Heart right ventricle (tissue), 16 donors: ENCODE measurements at regions of chr10 and their contacts with region 1.

Region 1: GRCh38 chr10:37754538-37755323 is 102.7 kb downstream of the ZNF248 start:
- DNase-seq: peak in 1 of 2 donors; percentile 18
- ATAC-seq: peak in 7 of 8 donors; percentile 34 to 86 (median 62)
- H3K4me3 ChIP-seq: no peak overlapping the region
- H3K27ac ChIP-seq: no peak overlapping the region
- H3K4me1 ChIP-seq: no peaks in the 10 kb centered on the region
- H3K27me3 ChIP-seq: no peaks in the 10 kb centered on the region
- CTCF ChIP-seq: peak in 8 of 9 donors; percentile 28 to 68 (median 60)

Region 2: GRCh38 chr10:36899651-36900050 is 855.1 kb before region 1 on chr10:
- intact Hi-C with region 1: loop called in 4 of 10 experiments (anchors 10 kb)
- DNase-seq: no peak
- ATAC-seq: no peak
- H3K4me3 ChIP-seq: no peak overlapping the region
- H3K27ac ChIP-seq: no peak overlapping the region
- H3K4me1 ChIP-seq: no peaks in the 10 kb centered on the region
- H3K27me3 ChIP-seq: no peaks in the 10 kb centered on the region
- CTCF ChIP-seq: no peak

Region 3: GRCh38 chr10:37434091-37434490 is 320.6 kb before region 1 on chr10:
- intact Hi-C with region 1: loop called in 5 of 10 experiments (anchors 5 to 10 kb)
- DNase-seq: no peak
- ATAC-seq: no peak
- H3K4me3 ChIP-seq: no peak overlapping the region
- H3K27ac ChIP-seq: no peak overlapping the region
- H3K4me1 ChIP-seq: no peaks in the 10 kb centered on the region
- H3K27me3 ChIP-seq: peaks cover 0 to 17% (median 0%) of the 10 kb centered on the region in 7 donors
- CTCF ChIP-seq: peak in 7 of 9 donors; percentile 15 to 53 (median 35)

Region 4: DNA sequence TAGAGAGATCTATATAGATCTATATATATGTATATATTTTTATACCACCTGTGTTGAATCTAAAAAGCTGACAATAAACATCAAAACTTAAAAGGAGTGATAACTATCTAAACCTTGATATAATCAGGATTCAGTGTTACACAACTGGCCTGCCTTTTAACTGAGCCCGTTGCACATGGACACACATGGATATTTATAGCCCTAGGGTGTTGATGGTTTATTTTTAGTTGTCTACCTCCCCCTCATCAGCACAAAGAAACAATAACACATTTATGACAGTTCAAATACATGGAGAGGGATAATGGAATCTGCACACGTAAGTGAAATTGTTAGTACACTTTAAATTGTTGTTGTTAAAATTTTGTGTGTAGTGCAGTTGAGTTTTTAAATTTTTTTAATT is 234.2 kb before region 1 on chr10:
- intact Hi-C with region 1: loop called in 1 of 10 experiments (anchors 10 kb)
- DNase-seq: no peak
- ATAC-seq: peak in 6 of 8 donors; percentile 70 to 92 (median 79)
- H3K4me3 ChIP-seq: no peak overlapping the region
- H3K27ac ChIP-seq: no peak overlapping the region
- H3K4me1 ChIP-seq: peaks cover 0 to 11% (median 0%) of the 10 kb centered on the region in 9 donors
- H3K27me3 ChIP-seq: no peaks in the 10 kb centered on the region
- CTCF ChIP-seq: no peak

Region 5: DNA sequence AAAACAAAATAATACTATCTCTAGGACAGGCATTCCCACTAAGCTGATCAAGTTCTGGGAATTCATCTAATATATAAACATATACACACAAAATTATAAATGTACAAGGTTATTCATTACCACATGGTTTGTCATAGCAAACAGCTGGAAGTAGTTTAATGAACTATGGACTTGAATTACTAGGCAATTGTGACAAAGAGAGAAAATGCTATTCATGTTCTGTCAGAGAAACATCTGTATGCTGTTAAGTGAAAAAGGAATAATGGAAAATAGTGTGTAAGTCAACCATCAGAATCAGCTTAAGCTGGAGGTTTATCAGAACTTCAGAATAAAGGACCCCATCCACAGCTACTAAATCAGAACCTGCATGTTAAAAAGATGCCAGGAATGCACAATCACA is 99.9 kb after region 1 on chr10:
- intact Hi-C with region 1: no loop called
- DNase-seq: no peak
- ATAC-seq: no peak
- H3K4me3 ChIP-seq: no peak overlapping the region
- H3K27ac ChIP-seq: no peak overlapping the region
- H3K4me1 ChIP-seq: peaks cover 0 to 36% (median 32%) of the 10 kb centered on the region in 9 donors
- H3K27me3 ChIP-seq: no peaks in the 10 kb centered on the region
- CTCF ChIP-seq: no peak